ENCODE measurements at regions of chr19 and their contacts with region 1.

Region 1: DNA sequence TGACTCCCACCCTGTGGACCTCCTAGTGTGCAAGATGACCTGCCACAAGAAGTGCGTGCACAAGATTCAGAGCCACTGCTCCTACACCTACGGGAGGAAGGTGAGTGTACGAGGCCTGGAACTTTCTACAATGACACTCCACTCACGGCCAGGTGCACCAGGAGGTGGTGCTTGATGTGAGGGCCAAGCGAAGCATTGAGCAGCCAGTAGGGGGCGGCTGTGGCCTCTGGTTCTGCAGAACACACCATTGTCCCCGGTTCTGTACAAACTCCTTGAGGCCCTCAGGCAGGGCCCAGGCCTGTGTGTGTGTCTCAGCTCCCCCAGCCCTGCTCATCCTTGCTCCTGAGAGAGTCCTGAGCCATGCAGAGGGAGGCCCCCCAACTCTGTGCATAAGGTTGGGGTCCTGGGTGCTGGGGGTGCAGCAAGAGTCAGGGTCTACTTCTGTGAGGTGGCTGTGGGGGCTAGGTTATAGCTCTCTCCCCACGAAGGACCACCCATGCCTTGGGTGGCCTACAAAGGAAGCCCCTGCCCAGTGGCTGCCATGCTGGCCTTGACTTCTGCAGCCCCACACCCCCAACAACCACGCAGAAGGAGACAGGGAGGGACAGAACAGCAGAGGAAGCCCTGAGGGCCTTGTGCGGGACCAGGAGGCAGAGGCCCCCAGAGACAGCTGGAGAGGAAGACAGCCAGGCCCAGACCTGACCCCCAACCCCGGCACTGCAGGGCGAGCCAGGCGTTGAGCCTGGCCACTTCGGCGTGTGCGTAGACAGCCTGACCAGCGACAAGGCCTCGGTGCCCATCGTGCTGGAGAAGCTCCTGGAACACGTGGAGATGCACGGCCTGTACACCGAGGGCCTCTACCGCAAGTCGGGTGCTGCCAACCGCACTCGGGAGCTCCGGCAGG is 9.7 kb upstream of the USE1 start:
- DNase-seq: peak; percentile 67
- H3K4me3 ChIP-seq: no peak overlapping the region
- H3K27ac ChIP-seq: no peak overlapping the region
- H3K4me1 ChIP-seq: no peaks in the 10 kb centered on the region
- H3K27me3 ChIP-seq: no peaks in the 10 kb centered on the region
- CTCF ChIP-seq: peak; percentile 37 to 66 (median 51)
- POLR2A ChIP-seq: no peak

Region 2: DNA sequence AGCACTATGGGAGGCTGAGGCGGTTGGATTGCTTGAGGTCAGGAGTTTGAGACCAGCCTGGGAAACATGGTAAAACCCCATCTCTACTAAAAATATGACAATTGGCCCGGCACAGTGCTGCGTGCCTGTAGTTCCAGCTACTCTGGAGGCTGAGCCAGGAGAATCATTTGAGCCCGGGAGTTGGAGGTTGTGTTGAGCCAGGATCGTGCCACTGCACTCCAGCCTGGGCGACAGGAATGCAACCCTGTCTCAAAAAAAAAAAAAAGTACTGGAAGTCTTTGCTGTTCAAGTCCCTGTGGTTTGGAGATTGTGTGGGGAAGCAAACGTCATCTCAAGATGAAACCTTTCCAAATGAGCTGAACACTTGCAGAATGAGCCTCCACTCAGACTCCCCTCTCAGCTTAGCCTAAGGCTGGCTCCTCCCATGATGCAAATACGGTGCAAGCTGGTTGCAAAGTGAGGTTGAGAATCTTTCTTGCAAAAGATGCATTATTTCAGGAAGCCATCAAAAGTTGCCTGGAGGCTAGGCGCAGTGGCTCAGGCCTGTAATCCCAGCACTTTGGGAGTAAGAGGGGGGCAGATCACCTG is 83.7 kb before region 1 on chr19:
- intact Hi-C with region 1: no loop called
- DNase-seq: no peak
- H3K4me3 ChIP-seq: no peak overlapping the region
- H3K27ac ChIP-seq: no peak overlapping the region
- H3K4me1 ChIP-seq: peaks cover 6% of the 10 kb centered on the region
- H3K27me3 ChIP-seq: no peaks in the 10 kb centered on the region
- CTCF ChIP-seq: no peak
- POLR2A ChIP-seq: no peak

Region 3: GRCh38 chr19:17260842-17261325 is 55.4 kb after region 1 on chr19:
- intact Hi-C with region 1: no loop called
- DNase-seq: peak; percentile 82
- H3K4me3 ChIP-seq: no peak overlapping the region
- H3K27ac ChIP-seq: no peak overlapping the region
- H3K4me1 ChIP-seq: no peaks in the 10 kb centered on the region
- H3K27me3 ChIP-seq: no peaks in the 10 kb centered on the region
- CTCF ChIP-seq: peak; percentile 50 to 73 (median 67)
- POLR2A ChIP-seq: no peak

Region 4: DNA sequence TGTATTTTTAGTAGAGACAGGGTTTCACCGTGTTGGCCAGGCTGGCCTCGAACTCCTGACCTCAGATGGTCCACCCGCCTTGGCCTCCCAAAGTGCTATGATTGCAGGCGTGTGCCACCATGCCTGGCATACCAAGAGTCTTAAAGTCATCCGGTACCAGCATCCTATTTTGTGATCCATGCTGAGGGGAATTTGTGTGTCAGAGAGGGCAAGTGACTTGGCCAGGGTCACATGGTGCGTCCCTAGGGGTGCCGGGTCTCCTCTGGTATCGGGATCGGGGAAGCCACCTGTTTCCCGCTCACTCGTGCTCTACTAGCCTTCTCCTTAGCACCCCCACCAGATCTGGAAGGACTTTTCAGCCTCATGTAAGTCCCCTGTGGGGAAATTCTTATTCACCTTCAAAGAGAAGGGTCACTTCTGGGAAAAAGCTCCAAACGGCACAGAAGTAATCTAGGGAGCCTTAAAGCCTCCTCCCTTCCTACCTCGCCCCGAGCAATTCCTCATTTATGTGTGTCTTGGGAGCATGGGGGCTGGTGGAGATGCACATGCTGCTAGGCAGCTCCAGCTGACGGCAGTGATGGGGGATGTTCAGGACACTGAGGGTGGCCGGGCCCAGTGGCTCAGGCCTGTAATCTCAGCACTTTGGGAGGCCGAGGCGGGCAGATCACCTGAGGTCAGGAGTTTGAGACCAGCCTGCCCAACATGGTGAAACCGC is 70.1 kb after region 1 on chr19:
- intact Hi-C with region 1: loop called (anchors 10 kb)
- DNase-seq: no peak
- H3K4me3 ChIP-seq: no peak overlapping the region
- H3K27ac ChIP-seq: no peak overlapping the region
- H3K4me1 ChIP-seq: no peaks in the 10 kb centered on the region
- H3K27me3 ChIP-seq: no peaks in the 10 kb centered on the region
- CTCF ChIP-seq: no peak
- POLR2A ChIP-seq: no peak

Region 5: DNA sequence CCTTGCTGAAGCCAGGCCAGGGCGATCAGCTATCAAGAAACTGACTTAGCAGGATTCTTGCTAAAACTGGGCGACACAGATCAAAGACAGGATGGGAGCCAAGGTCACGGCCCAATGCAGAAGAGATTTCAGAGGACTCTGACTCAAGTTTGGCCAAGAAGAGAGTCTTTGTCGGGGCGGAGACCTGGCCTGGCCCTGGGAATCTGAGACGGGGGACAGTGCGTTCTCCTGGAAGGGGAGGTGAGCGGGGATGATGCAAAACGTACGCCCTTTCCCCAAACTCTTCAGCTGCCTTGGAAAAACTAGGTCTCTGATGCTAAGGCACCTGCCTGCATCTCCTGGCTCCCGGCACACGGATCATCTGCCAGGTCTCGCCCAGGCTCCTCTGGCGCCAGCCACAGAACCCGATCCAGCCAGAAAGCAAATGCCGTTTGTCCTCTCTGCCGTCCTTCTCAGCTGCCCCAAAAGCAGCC is 224.2 kb after region 1 on chr19:
- intact Hi-C with region 1: no loop called
- DNase-seq: peak; percentile 45
- H3K4me3 ChIP-seq: no peak overlapping the region
- H3K27ac ChIP-seq: peak overlapping the region in 1 of 2 donors; percentile 10
- H3K4me1 ChIP-seq: peaks cover 10% of the 10 kb centered on the region
- H3K27me3 ChIP-seq: no peaks in the 10 kb centered on the region
- CTCF ChIP-seq: no peak
- POLR2A ChIP-seq: no peak